ENCODE measurements at regions of chr3 and their contacts with region 1.

Region 1: GRCh38 chr3:100761211-100761942 is 52.1 kb downstream of the TFG start:
- DNase-seq: peak; percentile 37
- H3K4me3 Mint-ChIP-seq: no peak overlapping the region
- H3K27ac Mint-ChIP-seq: no peak overlapping the region
- H3K4me1 Mint-ChIP-seq: peaks cover 17% of the 10 kb centered on the region
- H3K27me3 Mint-ChIP-seq: no peaks in the 10 kb centered on the region

Region 2: GRCh38 chr3:100525753-100526612 is 235.4 kb before region 1 on chr3:
- CTCF ChIA-PET with region 1: no interaction called
- DNase-seq: no peak
- H3K4me3 Mint-ChIP-seq: no peak overlapping the region
- H3K27ac Mint-ChIP-seq: no peak overlapping the region
- H3K4me1 Mint-ChIP-seq: no peaks in the 10 kb centered on the region
- H3K27me3 Mint-ChIP-seq: peaks cover 26% of the 10 kb centered on the region

Region 3: GRCh38 chr3:100693225-100693624 is 68.2 kb before region 1 on chr3:
- CTCF ChIA-PET with region 1: no interaction called
- DNase-seq: no peak
- H3K4me3 Mint-ChIP-seq: no peak overlapping the region
- H3K27ac Mint-ChIP-seq: no peak overlapping the region
- H3K4me1 Mint-ChIP-seq: no peaks in the 10 kb centered on the region
- H3K27me3 Mint-ChIP-seq: peaks cover 36% of the 10 kb centered on the region

Region 4: DNA sequence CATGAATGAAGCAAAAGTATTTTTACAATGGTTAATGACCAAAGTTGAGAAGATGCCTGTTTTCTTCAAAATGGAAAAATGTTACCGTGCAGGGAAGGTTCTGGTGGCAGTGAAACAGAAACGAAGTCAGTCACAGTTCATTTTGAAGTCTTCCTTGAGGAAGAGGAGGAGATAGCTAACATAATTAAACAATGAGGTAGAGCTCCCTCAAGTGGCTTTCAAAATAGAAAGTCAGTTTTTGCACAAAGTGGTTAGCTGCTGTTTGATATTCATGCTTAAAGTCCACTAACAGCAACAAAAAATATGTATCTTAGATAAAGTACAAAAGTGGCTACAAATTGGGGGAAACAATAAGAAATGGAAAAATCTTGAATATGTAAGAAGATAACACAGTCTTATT is 35.2 kb after region 1 on chr3:
- CTCF ChIA-PET with region 1: interaction called, 10 read pairs
- DNase-seq: no peak
- H3K4me3 Mint-ChIP-seq: no peak overlapping the region
- H3K27ac Mint-ChIP-seq: no peak overlapping the region
- H3K4me1 Mint-ChIP-seq: peaks cover 5% of the 10 kb centered on the region
- H3K27me3 Mint-ChIP-seq: no peaks in the 10 kb centered on the region